Activated T-helper 1 cell treated with anti-CD3 and anti-CD28 coated beads, Interleukin-12 subunit alpha, Interleukin-12 subunit beta, Interleukin-2, Interleukin-4 antibody, amounts not matched to agents 30 ng/mL and 10 ng/mL and 1 ng/mL, durations not matched to agents 14 hours and 24 hours and 36 hours (primary cell): ENCODE measurements at regions of chr1 and their contacts with region 1.

Region 1: DNA sequence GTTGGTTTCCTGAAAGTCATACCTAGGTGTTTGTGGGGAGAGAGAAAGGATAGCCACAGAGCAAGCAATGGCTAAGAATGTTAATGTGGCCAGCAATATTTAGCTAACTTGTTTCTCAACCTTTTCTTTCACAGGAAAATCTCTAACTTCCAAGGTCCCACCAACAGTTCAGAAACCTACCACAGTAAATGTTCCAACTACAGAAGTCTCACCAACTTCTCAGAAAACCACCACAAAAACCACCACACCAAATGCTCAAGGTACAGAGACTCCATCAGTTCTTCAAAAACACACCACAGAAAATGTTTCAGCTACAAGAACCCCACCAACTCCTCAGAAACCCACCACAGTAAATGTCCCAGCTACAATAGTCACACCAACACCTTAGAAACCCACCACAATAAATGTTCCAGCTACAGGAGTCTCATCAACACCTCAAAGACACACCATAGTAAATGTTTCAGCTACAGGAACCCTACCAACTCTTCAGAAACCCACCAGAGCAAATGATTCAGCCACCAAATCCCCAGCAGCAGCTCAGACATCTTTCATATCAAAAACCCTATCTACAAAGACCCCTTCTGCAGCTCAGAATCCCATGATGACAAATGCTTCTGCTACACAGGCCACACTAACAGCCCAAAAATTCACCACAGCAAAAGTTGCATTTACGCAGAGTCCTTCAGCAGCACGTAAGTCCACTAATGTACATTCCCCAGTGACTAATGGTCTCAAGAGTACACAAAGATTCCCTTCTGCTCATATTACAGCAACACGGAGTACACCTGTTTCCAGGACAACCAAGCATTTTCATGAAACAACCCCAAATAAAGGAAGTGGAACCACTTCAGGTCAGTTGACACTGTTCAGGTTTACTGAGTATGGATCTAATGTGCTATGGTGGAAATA is 15.3 kb downstream of the CD55 start:
- DNase-seq: peak; percentile 65
- H3K4me3 Mint-ChIP-seq: peak overlapping the region; percentile 44
- H3K27ac Mint-ChIP-seq: peak overlapping the region; percentile 89
- H3K4me1 Mint-ChIP-seq: peaks cover 73% of the 10 kb centered on the region
- H3K27me3 Mint-ChIP-seq: peaks cover 2% of the 10 kb centered on the region

Region 2: GRCh38 chr1:207052911-207053769 is 283.7 kb before region 1 on chr1 and contains the start of gene PFKFB2:
- intact Hi-C with region 1: loop called (anchors 5 kb)
- DNase-seq: peak; percentile 90
- H3K4me3 Mint-ChIP-seq: peak within 1 kb of the TSS; percentile 100
- H3K27ac Mint-ChIP-seq: peak within 1 kb of the TSS; percentile 82
- H3K4me1 Mint-ChIP-seq: peaks cover 53% of the 10 kb centered on the region
- H3K27me3 Mint-ChIP-seq: peaks cover 5% of the 10 kb centered on the region
- total RNA-seq, gene PFKFB2: 2.9 and 4.4 TPM in 2 replicates

Region 3: GRCh38 chr1:207097871-207098324 is 238.9 kb before region 1 on chr1:
- intact Hi-C with region 1: loop called (anchors 1 kb)
- DNase-seq: peak; percentile 50
- H3K4me3 Mint-ChIP-seq: peak overlapping the region; percentile 27
- H3K27ac Mint-ChIP-seq: peak overlapping the region; percentile 69
- H3K4me1 Mint-ChIP-seq: peaks cover 40% of the 10 kb centered on the region
- H3K27me3 Mint-ChIP-seq: no peaks in the 10 kb centered on the region

Region 4: DNA sequence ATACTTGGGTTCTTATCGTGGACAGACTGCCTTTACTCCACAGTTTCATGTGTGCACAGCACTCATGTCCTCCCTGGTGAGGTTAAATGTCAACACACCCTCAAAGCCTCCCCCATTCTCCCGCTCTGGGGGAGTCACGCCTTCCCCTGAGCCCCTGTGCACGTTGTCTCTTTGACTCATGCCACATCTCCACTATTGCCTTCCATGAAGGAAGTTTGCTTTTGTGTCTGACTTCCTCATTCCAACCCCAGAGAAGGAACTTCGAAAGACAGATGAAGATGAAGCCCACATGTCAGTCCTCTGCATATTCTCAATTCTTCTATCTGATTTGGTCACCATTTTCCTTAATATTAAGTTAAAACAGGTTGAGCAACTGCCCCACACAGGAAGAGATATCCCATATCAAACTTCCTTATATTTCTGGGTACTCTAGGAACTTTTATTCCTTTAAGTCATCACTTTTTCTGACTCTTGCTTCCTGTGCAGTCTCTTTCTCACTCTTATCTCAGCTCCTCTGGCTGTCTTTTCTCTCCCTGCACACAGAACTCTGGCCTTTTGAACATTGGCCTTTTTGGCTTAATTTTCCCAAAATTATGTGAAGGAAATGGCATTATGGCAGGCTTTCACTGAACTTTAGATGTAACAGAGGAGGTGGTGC is 191.3 kb before region 1 on chr1:
- intact Hi-C with region 1: no loop called
- DNase-seq: no peak
- H3K4me3 Mint-ChIP-seq: no peak overlapping the region
- H3K27ac Mint-ChIP-seq: no peak overlapping the region
- H3K4me1 Mint-ChIP-seq: no peaks in the 10 kb centered on the region
- H3K27me3 Mint-ChIP-seq: no peaks in the 10 kb centered on the region

Region 5: DNA sequence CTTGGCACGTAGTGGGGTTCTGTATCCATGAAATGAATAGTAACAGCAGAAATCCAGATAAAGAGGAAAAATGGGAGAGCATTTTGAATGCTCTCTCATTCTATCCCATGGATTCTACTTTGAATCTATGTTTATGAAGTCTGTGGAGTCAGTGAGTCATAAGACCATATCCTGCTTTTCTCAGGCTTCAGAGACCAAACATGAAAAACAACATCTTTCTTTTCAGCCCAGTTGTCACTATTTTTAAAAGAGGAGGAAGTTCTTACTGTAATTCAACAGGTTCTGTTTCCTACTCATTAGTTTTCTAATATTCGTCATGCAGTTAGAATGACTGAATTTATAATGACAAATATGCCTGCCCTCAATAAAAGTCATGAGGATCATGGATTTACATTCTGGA is 54.8 kb before region 1 on chr1:
- intact Hi-C with region 1: no loop called
- DNase-seq: no peak
- H3K4me3 Mint-ChIP-seq: peak overlapping the region; percentile 55
- H3K27ac Mint-ChIP-seq: peak overlapping the region; percentile 57
- H3K4me1 Mint-ChIP-seq: peaks cover 69% of the 10 kb centered on the region
- H3K27me3 Mint-ChIP-seq: no peaks in the 10 kb centered on the region

Region 6: DNA sequence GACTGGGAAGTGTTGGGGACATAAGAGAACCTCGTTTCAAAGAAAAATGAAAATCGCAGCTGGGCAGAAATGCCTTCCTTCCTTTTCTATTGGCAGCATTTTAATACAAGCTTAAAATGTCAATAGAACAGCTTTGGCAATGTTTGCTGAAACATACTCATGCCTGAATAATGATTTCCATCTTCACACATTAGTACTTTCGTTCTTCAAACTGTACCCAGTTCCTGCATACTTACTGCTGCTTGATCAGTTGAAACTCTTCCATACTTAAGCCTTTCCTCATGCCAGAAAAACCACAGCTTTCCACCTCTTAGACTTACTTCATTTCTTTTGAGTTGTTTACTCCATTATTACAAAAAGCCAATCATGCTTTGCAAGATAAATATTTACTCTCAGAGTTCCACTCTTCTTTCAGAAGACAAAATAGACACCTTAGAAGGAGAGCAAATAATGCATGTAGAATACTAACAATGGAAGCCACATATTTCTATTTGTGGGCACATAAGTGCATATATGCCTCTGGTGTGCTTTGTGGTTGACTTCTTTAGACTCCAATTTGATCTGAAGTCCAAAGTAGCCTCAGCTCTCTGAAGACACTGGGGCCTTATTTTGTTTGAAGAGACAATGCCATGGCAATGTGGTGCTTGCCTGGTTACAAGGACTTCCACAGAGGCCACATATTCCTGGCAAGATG is 38.0 kb before region 1 on chr1:
- intact Hi-C with region 1: no loop called
- DNase-seq: no peak
- H3K4me3 Mint-ChIP-seq: no peak overlapping the region
- H3K27ac Mint-ChIP-seq: no peak overlapping the region
- H3K4me1 Mint-ChIP-seq: peaks cover 24% of the 10 kb centered on the region
- H3K27me3 Mint-ChIP-seq: peaks cover 3% of the 10 kb centered on the region

Region 7: GRCh38 chr1:207362962-207363858 is 26.4 kb after region 1 on chr1:
- intact Hi-C with region 1: loop called (anchors 1 kb)
- DNase-seq: no peak
- H3K4me3 Mint-ChIP-seq: no peak overlapping the region
- H3K27ac Mint-ChIP-seq: no peak overlapping the region
- H3K4me1 Mint-ChIP-seq: no peaks in the 10 kb centered on the region
- H3K27me3 Mint-ChIP-seq: no peaks in the 10 kb centered on the region

Region 8: DNA sequence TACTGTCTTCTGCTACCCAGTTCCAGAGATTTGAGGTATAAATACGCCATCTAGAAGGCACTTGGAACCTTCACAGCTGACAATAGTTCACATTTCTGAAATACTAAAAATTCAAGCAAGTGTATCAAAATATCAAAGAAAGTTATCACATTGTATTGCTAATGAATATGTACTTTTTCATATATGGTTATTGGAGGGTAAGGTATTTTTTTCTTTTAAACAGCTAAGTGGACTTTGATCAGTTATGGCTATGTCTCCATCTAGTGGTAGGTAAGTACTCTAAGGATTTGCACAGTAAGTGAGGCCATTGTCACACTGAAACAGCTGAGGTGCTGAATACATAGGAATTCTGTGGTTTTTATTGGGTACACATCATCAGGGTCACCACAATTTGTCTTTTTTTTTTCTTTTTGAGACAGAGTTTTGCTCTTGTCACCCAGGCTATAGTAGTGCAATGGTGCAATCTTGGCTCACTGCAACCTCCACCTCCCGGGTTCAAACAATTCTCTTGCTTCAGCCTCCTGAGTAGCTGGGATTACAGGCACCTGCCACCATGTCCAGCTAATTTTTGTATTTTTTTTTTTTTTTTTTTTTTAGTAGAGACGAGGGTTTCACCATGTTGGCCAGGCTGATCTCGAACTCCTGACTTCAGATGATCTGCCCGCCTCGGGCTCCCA is 68.2 kb after region 1 on chr1:
- intact Hi-C with region 1: loop called (anchors 1 kb)
- DNase-seq: no peak
- H3K4me3 Mint-ChIP-seq: no peak overlapping the region
- H3K27ac Mint-ChIP-seq: no peak overlapping the region
- H3K4me1 Mint-ChIP-seq: peaks cover 21% of the 10 kb centered on the region
- H3K27me3 Mint-ChIP-seq: peaks cover 2% of the 10 kb centered on the region

Region 9: GRCh38 chr1:207828485-207829158 is 491.8 kb after region 1 on chr1:
- intact Hi-C with region 1: loop called (anchors 5 kb)
- DNase-seq: peak; percentile 36
- H3K4me3 Mint-ChIP-seq: no peak overlapping the region
- H3K27ac Mint-ChIP-seq: peak overlapping the region; percentile 67
- H3K4me1 Mint-ChIP-seq: peaks cover 98% of the 10 kb centered on the region
- H3K27me3 Mint-ChIP-seq: peaks cover 2% of the 10 kb centered on the region